AG04449 (cell line): ENCODE measurements at regions of chr18 and their contacts with region 1.

Region 1: GRCh38 chr18:58578835-58579560 is 49.9 kb downstream of the ALPK2 start:
- DNase-seq: peak; percentile 73
- H3K4me3 ChIP-seq: peak overlapping the region; percentile 61
- CTCF ChIP-seq: no peak

Region 2: DNA sequence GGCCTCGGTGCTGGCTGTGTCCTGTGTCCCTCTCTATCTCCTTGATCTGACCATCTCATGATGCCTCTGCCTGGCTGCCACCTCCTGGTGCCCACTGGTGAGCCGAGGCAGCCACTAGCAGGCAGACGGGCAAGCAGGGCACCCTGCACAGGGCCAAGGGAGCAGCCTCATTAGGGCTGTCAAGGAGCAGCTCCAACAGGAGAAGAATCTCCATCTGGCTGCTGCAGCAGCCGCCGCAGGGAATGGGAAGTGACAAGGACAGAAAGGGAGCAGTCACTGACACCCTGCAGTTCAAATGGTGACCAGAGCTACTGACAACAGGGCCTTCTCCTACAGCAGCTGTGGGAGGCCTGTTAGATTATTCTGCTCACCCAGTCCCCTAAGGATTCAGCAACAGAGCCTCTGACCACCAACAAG is 17.3 kb after region 1 on chr18:
- CTCF ChIA-PET with region 1: no interaction called
- POLR2A ChIA-PET with region 1: no interaction called
- DNase-seq: no peak
- H3K4me3 ChIP-seq: no peak overlapping the region
- CTCF ChIP-seq: no peak

Region 3: DNA sequence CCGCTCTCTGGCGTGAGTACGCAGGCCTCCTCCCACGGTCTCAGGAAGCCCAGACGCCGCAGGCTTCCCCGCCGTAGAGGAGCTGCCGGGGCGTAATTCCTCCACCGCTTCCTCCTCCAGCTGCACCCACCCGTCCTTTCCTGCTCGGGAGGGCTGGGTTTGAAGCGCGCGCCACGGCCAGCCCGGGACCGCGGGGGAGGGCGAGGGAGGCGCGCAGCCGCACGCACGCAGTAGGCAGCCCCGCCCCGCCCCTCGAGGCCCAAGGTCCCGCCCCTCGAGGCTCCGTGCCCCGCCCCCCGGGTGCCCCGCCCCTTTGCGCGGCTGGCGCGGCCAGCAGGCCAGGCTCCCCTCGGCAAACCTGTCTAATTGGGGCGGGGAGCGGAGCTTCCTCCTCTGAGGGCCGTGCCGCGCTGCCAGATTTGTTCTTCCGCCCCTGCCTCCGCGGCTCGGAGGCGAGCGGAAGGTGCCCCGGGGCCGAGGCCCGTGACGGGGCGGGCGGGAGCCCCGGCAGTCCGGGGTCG is 92.2 kb after region 1 on chr18 and contains the start of gene MALT1:
- CTCF ChIA-PET with region 1: interaction called, 3 read pairs
- POLR2A ChIA-PET with region 1: interaction called, 11 read pairs
- DNase-seq: no peak
- H3K4me3 ChIP-seq: peak within 1 kb of the TSS; percentile 71
- CTCF ChIP-seq: no peak